ENCODE measurements at regions of chr4 and their contacts with region 1.

Region 1: DNA sequence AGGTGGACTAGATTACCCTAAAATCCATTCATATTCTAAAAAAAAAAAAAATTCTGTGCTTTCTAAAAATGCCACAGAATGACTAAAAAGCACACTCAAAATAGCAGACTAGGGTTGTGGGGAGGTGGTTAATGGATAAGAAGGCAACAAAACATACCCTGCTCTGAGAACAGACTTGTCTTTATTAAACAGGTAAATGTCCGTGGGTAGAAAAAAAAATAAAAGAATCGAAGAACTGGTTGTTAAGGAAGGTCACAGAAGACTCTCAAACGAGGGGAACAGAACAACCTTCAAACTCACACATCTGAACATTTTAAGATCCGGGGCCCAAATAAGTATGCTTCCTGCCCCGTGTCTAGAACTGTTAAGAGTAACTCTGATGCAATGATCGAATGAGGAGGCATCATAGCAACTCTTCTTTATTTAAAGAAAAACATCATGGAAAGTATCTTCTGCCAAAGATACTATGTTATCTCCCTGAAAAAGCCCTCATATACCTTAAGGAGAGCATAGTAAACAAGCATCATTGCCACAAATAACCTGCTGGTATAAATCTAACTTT is 68.4 kb downstream of the ELF2 start:
- DNase-seq: no peak

Region 2: GRCh38 chr4:139015948-139016471 is 92.6 kb before region 1 on chr4:
- intact Hi-C with region 1: no loop called
- DNase-seq: peak; percentile 81

Region 3: DNA sequence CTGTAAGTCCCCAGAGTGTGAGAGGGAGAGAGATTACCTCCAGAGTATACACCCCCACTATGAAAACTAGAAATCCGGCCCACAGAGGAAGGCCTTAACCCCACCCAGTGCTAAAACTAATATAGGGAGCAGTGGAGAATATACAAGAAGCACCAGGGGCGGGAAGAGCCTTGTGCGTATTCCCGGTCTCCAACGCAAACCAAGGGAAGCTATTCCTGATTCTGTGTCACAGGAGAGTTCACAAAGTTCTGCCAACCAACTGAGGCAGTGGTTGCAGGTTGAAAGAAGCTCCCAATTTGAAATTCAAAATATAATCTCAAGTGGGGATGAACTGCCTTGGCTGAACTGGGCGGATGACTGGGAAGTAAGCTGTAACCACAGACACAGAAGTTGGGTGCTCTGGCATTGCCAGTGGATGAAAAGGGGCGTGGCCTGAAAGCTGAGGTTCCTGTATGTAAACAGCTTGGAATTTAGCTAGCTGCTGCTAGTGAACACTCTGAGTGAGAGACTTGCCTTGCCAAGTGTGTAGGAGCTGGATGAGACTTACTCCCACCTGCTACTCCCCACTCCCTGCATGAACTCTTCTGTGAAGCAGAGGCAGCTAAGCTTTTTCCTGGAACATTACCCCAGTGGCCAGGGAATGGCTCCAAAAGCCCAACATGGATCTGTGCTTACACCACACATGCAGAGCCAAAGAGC is 35.7 kb after region 1 on chr4:
- intact Hi-C with region 1: loop called (anchors 5 kb)
- DNase-seq: peak; percentile 79